SK-N-SH (cell line): ENCODE measurements at regions of chr22 and their contacts with region 1.

Region 1: DNA sequence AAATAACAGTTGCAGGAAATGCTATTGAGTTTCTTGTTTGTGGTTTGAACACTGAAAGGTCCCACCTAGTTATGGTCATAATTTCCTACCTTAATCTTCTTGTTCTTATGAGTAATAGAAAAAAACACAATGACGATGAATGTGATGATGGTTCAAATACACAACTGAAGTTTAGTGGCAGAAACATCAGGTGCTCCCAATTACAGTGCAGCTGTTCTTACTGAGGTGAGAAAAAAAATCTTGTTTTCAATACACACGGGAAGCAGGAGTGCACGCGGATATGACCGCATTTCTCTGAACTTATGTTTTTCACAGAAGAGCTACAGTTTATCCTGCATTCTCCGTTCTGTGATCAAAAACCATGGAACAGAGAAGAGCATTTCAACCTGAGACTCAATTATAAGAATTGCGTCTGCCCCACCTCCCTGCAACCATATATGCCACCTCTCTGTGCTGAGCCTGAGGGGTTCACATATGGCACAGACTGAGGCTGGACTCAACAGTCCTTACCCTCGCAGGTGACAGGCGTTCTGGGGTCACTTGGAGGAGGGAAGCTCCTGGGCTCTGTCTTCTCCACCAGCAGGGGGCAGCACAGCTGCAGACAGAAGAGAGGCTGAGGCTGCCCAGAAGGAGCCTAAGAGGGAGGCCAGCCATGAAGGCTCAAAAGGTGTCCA is 99.7 kb upstream of the IGLL5 start:
- DNase-seq: peak; percentile 66
- H3K4me3 ChIP-seq: peak overlapping the region in 1 of 2 experiments; percentile 31; a peak in 1 of 4 replicates
- H3K27ac ChIP-seq: no peak overlapping the region
- H3K4me1 ChIP-seq: no peaks in the 10 kb centered on the region
- H3K27me3 ChIP-seq: no peaks in the 10 kb centered on the region
- CTCF ChIP-seq: peak; percentile 79
- EP300 ChIP-seq: no peak
- RAD21 ChIP-seq: peak; percentile 55

Region 2: DNA sequence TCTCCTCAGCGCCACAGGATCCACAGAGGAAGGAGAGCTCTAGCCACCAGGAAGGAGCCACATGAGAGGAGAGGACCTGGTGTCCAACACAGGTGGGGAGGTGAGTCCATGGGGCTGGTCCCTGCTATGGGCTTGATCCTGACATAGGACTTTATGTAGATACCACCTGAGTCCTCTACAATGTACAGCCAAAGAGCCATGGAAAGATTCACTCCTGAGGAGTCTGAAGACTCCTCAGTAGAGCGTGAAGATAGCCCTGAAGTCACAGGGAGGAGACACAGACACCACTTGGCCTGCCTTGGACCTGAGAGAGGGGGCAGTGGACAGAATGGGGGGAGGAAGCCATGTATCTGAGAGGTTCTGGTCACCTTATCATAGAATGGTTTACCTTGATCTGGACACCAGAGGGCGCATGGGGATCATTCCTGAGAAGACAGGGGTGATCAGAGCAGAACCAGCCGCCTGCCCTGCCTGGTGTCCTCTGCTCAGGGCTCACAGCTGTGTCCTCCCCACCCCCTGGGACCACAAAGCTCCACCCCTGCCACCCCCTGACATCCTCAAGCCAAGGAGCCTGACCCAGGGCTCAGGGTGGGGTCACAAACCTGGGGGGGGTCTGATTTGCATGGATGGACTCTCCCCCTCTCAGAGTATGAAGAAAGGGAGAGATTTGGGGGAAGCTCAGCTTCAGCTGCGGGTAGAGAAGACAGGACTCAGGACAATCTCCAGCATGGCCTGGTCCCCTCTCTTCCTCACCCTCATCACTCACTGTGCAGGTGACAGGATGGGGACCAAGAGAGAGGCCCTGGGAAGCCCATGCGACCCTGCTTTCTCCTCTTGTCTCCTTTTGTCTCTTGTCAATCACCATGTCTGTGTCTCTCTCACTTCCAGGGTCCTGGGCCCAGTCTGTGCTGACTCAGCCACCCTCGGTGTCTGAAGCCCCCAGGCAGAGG is 356.4 kb before region 1 on chr22:
- CTCF ChIA-PET with region 1: no interaction called
- POLR2A ChIA-PET with region 1: no interaction called
- DNase-seq: peak; percentile 79
- H3K4me3 ChIP-seq: no peak overlapping the region
- H3K27ac ChIP-seq: no peak overlapping the region
- H3K4me1 ChIP-seq: no peaks in the 10 kb centered on the region
- H3K27me3 ChIP-seq: no peaks in the 10 kb centered on the region; the same call in 1 of the 2 replicates
- CTCF ChIP-seq: peak; percentile 68
- EP300 ChIP-seq: no peak
- RAD21 ChIP-seq: peak; percentile 71

Region 3: DNA sequence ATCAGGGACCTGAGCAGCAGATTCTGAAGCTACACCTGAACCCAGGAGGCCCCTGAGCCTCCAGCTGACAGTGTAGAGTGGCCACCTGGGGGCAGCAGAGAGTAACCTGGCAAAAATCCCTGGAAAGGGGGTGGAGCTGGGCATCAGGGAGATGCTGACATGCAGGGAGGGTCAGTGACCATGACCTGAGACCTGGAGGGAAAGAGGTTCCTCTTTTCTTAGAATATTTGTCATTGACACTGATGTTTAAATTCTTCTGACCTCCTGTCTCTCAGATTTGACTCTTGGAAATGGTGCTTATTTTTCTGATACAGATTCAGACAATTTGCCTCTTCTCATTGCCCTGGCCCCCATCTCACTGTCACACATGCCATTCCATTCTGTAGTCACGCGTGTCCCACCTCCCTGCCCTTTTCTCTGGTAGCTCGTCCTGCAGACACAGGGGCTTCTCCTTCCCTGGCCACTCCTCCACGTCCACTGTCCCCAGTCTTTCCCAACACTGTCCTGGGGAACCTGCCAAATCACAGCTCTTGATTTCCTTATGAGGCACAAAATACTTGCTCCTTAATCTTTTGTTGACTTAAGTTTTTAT is 17.5 kb before region 1 on chr22:
- CTCF ChIA-PET with region 1: interaction called, 33 read pairs
- POLR2A ChIA-PET with region 1: no interaction called
- DNase-seq: peak; percentile 66
- H3K4me3 ChIP-seq: no peak overlapping the region; a peak in 1 of 4 replicates
- H3K27ac ChIP-seq: no peak overlapping the region
- H3K4me1 ChIP-seq: no peaks in the 10 kb centered on the region; a peak in 1 of 4 replicates
- H3K27me3 ChIP-seq: no peaks in the 10 kb centered on the region; the same call in 1 of the 2 replicates
- CTCF ChIP-seq: peak; percentile 73
- EP300 ChIP-seq: no peak
- RAD21 ChIP-seq: no peak

Region 4: DNA sequence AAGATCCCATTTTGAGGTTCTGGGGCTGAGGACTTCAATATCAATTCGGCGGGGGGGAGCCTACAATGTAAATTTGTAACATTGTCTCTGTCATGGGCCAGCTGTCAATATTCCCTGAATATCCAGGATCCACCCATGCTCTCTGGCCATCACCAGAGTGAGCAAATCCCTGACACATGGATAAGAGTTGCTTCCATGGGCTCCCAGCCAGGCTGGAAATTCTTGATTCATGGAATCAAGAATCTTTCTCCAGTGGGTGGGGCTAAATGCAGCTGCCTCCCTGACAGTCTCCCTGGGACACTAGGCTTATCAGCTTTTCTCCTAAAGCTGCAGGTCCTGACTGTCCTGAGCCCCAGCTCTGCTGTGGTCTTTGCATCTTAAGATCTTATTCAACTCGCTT is 12.8 kb after region 1 on chr22:
- CTCF ChIA-PET with region 1: interaction called, 22 read pairs
- POLR2A ChIA-PET with region 1: no interaction called
- DNase-seq: no peak
- H3K4me3 ChIP-seq: no peak overlapping the region
- H3K27ac ChIP-seq: no peak overlapping the region
- H3K4me1 ChIP-seq: no peaks in the 10 kb centered on the region
- H3K27me3 ChIP-seq: no peaks in the 10 kb centered on the region
- CTCF ChIP-seq: no peak
- EP300 ChIP-seq: no peak
- RAD21 ChIP-seq: no peak

Region 5: GRCh38 chr22:22810018-22810427 is 22.1 kb after region 1 on chr22:
- CTCF ChIA-PET with region 1: interaction called, 14 read pairs
- POLR2A ChIA-PET with region 1: no interaction called
- DNase-seq: peak; percentile 51
- H3K4me3 ChIP-seq: no peak overlapping the region
- H3K27ac ChIP-seq: no peak overlapping the region
- H3K4me1 ChIP-seq: no peaks in the 10 kb centered on the region
- H3K27me3 ChIP-seq: no peaks in the 10 kb centered on the region
- CTCF ChIP-seq: peak; percentile 58
- EP300 ChIP-seq: no peak
- RAD21 ChIP-seq: peak; percentile 34